T-cell (primary cell): ENCODE measurements at regions of chr9 and their contacts with region 1.

Region 1: GRCh38 chr9:127715394-127716337 is at the starts of genes PTRH1 and TTC16:
- DNase-seq: peak; percentile 89 to 98 (median 95)
- ATAC-seq: peak; percentile 92 to 95 (median 94)
- H3K4me3 ChIP-seq: peak within 1 kb of the TSS; percentile 78 to 97
- H3K4me3 Mint-ChIP-seq: peak within 1 kb of the TSS; percentile 94 to 98 (median 98)
- H3K27ac ChIP-seq: peak within 1 kb of the TSS; percentile 75
- H3K27ac Mint-ChIP-seq: peak within 1 kb of the TSS; percentile 91 to 95
- H3K4me1 ChIP-seq: peaks cover 8 to 70% of the 10 kb centered on the region in 2 experiments
- H3K4me1 Mint-ChIP-seq: peaks cover 34 to 46% (median 38%) of the 10 kb centered on the region in 3 donors
- H3K27me3 ChIP-seq: no peaks in the 10 kb centered on the region
- H3K27me3 Mint-ChIP-seq: no peaks in the 10 kb centered on the region
- total RNA-seq, gene PTRH1: 4.4 to 15.9 (median 12.9) TPM
- total RNA-seq, gene TTC16: 4.6 to 31.8 (median 6.2) TPM

Region 2: DNA sequence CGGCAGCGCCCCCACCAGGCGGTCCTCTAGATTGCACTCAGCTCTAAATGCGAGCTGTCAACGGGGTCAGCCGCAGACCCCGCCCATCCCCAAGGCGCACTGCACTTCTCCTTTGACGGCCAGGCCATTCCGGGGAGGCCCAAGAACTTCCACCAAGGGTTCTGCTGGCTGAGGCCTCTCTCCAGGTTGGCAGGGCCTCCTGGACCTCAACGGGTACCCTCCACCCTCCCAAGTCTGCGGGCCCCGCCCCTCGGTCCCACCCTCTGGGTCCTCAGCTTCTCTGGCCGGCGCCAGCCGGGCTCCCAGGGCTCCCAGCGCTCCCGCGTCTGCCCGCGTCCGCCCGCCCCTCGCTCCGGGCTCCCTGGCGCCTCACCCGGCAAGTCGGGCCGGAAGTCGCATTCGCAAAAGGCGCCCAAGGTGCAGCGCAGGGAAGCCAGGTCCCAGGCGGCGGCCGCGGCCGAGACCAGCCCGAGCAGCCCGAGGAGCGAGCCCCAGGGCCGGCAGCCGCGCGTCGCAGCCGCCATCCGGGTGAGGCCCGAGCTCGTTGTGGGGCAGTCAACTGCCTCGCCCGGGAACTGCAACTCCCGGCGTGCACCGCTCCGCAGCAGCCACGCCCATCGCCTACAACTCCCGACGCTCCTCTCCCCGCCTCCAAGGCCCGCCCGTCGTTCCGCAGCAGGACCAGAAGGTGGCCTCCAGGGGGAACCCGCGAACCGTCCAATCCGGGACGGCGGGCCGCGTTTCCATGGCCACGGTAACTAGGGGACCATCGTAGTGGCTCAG is 19.3 kb after region 1 on chr9 and contains the start of gene TOR2A:
- CTCF ChIA-PET with region 1: interaction called, 9 to 20 read pairs
- POLR2A ChIA-PET with region 1: no interaction called
- DNase-seq: peak; percentile 96 to 100 (median 99)
- ATAC-seq: peak; percentile 90 to 93 (median 92)
- H3K4me3 ChIP-seq: peak within 1 kb of the TSS; percentile 60 to 69
- H3K4me3 Mint-ChIP-seq: peak within 1 kb of the TSS; percentile 82 to 94 (median 85)
- H3K27ac ChIP-seq: peak within 1 kb of the TSS; percentile 95
- H3K27ac Mint-ChIP-seq: peak within 1 kb of the TSS; percentile 92 to 97
- H3K4me1 ChIP-seq: peaks cover 2 to 23% of the 10 kb centered on the region in 2 experiments
- H3K4me1 Mint-ChIP-seq: peaks cover 5 to 22% (median 18%) of the 10 kb centered on the region in 3 donors
- H3K27me3 ChIP-seq: no peaks in the 10 kb centered on the region
- H3K27me3 Mint-ChIP-seq: no peaks in the 10 kb centered on the region
- total RNA-seq, gene TOR2A: 7.7 to 18.4 (median 15.5) TPM